BJ (cell line): ENCODE measurements at regions of chr4 and their contacts with region 1.

Region 1: GRCh38 chr4:163332500-163333406 is at the start of gene NPY1R:
- DNase-seq: peak; percentile 9
- H3K4me3 ChIP-seq: peak within 1 kb of the TSS; percentile 43
- H3K27me3 ChIP-seq: peaks cover 11% of the 10 kb centered on the region
- CTCF ChIP-seq: peak; percentile 84
- polyA plus RNA-seq, gene NPY1R: not detected in 2 replicates

Region 2: GRCh38 chr4:162497564-162498167 is 835.1 kb before region 1 on chr4:
- CTCF ChIA-PET with region 1: interaction called, 34 read pairs
- POLR2A ChIA-PET with region 1: no interaction called
- DNase-seq: no peak
- H3K4me3 ChIP-seq: no peak overlapping the region
- H3K27me3 ChIP-seq: no peaks in the 10 kb centered on the region
- CTCF ChIP-seq: peak; percentile 69

Region 3: DNA sequence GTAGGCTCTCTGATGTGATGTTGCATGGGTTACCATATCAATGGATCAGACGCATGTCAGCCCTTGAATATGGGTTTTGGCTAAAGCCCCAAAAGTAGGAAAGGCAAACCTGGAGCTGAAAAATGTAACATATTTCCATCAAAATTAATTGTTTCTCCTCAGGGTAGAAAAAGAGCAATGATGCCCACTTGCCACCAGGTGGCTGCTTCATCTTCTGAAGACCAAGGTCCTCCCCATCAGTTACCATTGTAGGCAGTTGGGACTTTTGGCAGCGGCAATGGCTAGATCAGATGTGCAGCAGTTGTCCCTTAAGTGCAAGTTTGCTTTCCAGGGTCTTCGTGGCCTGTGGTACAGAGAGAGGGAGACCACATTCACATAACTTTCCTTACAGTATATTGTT is 284.3 kb before region 1 on chr4:
- CTCF ChIA-PET with region 1: interaction called, 12 read pairs
- POLR2A ChIA-PET with region 1: no interaction called
- DNase-seq: no peak
- H3K4me3 ChIP-seq: no peak overlapping the region
- H3K27me3 ChIP-seq: no peaks in the 10 kb centered on the region
- CTCF ChIP-seq: peak; percentile 52

Region 4: DNA sequence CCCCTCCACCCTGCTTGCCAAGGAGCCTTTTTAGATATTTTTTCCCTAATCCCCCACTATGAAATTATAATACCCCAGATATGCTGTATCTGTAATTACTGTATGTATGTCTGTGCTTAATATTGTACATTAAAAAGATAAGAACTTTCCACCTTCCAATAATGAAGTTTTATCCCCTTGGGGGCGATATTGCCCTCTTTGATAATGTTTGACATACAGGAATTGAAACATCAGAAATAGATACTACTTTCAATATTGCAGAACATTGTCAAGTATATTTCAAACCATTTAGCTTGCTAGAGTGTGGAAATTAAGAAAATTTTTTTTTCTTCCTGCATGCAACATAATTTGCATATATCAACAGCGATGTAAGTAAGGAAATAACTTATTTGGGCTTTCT is 225.0 kb before region 1 on chr4:
- CTCF ChIA-PET with region 1: interaction called, 23 read pairs
- POLR2A ChIA-PET with region 1: no interaction called
- DNase-seq: no peak
- H3K4me3 ChIP-seq: no peak overlapping the region
- H3K27me3 ChIP-seq: no peaks in the 10 kb centered on the region
- CTCF ChIP-seq: no peak

Region 5: DNA sequence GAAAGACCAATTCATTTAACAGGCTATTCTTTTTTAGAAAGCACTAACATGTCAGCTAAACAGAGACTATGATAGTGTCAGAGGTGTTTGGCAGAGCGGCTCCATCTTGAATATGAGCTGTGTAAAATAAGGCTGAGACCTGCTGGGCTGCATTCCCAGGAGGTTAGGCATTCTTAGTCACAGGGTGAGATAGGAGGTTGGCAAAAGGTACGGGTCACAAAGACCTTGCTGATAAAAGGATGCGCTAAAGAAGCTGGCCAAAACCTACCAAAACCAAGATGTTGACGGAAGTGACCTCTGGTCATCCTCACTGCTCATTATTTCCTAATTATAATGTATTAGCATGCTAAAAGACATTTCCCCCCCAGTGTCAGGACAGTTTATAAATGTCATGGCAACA is 52.8 kb after region 1 on chr4:
- CTCF ChIA-PET with region 1: no interaction called
- POLR2A ChIA-PET with region 1: no interaction called
- DNase-seq: no peak
- H3K4me3 ChIP-seq: no peak overlapping the region
- H3K27me3 ChIP-seq: no peaks in the 10 kb centered on the region
- CTCF ChIP-seq: no peak

Region 6: DNA sequence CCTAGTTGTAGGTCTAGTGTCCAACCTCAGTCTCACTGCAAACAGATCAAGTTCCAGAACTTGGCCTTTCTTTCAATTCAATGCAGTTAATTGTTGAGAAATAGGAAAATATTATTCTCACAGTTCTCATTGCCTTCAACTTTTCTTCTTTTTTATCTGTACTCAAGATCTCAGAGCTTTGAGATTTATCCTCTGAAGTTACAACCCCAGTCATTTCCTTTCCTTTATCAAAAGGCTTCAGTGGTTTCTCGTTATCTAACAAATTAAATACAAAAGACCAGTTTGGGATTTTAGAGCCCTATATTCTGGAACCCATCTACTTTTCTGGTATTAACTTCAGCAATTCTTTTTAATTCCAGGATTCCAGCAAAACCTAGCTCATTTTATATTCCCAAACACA is 292.0 kb after region 1 on chr4:
- CTCF ChIA-PET with region 1: no interaction called
- POLR2A ChIA-PET with region 1: no interaction called
- DNase-seq: no peak
- H3K4me3 ChIP-seq: no peak overlapping the region
- H3K27me3 ChIP-seq: no peaks in the 10 kb centered on the region
- CTCF ChIP-seq: no peak